Dorsolateral prefrontal cortex (tissue), 120 donors: ENCODE measurements at regions of chr12 and their contacts with region 1.

Region 1: DNA sequence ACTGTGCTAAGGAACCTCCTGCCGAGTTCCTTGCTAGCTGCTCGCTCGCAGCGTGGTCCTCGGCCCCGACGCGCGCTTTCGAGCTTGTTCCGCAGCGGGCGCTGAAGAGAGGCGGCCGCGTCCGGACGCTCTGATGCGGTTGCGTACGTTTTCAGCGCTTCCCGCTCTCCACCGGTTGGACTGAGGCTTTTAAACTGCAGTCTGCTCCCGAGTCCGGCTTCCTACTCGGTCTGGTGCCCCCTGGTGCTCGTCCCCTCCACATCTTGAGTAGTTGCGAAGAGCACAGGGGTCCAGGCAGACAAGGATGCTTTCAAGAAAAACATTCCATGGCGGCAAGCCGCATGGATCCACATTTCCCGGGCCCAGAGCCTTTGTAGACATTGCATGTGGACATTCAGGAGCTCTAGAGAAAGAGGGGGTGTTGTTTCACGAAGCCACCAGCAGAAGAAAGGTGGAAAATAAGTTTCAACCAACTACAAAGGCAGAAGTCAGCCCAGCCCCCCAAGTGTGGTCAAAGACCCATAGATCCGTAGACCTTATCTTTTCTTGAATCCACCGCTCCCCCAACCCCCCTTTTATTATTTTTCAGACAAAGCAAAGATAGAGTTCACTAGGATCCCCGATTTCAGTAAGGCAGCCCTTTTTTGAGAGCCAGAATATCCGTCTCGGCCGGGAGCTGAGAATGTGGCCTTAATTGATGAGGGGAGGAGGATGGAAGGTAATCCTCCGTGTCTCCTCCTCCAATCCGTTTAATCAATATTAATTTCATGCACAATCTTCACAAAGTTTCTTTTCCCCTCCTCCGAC is 984 bp upstream of the WNK1 start:
- DNase-seq: peak; percentile 86 to 94 (median 93)
- H3K4me3 ChIP-seq: peak overlapping the region; percentile 47 to 95 (median 87)
- H3K27ac ChIP-seq: peak overlapping the region; percentile 78 to 100 (median 99)
- H3K27me3 ChIP-seq: no peaks in the 10 kb centered on the region
- CTCF ChIP-seq: peak in 55 of 56 donors; percentile 47 to 91 (median 81)

Region 2: DNA sequence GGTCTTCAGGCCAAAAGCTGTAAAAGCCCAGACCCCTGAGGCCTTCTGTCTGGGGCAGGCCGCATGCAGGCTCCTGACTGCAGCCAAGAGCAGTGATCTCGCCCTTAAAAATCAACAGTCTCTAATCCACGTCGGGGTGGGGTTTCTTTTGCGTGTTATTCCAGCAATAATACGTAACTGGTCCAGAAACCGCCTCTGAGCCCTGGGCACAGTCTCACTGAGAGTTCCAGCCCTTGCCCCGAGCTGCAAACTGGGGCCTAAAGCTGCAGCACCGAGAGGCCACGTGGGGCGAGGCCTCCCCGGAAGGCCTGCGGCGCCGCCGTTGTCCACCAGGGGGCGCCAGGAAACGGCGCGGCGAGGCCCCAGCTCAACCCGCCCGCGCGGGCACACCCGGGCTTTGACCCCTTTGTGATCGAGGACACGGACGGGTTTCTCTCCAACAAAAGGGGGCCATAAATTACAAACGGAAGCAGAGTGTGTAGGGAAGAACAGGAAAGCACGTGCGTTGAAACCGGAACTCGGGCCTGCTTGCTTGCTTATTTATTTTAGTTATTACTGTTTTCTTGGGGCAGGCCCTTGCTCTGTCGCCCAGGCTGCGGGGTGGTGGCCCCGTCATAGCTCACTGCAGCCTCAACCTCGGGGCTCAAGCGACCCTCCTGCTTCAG is 175.3 kb before region 1 on chr12:
- intact Hi-C with region 1: loop called (anchors 2 kb)
- DNase-seq: peak in 9 of 10 donors; percentile 45 to 89 (median 67)
- H3K4me3 ChIP-seq: peak overlapping the region in 50 of 59 donors; percentile 7 to 51 (median 32)
- H3K27ac ChIP-seq: peak overlapping the region in 54 of 59 donors; percentile 0 to 83 (median 60)
- H3K27me3 ChIP-seq: no peaks in the 10 kb centered on the region
- CTCF ChIP-seq: peak; percentile 94 to 100 (median 99)

Region 3: GRCh38 chr12:642633-643474 is 108.5 kb before region 1 on chr12:
- intact Hi-C with region 1: loop called (anchors 2 kb)
- DNase-seq: peak; percentile 45 to 81 (median 60)
- H3K4me3 ChIP-seq: peak overlapping the region; percentile 45 to 81 (median 70)
- H3K27ac ChIP-seq: peak overlapping the region; percentile 83 to 100 (median 97)
- H3K27me3 ChIP-seq: no peaks in the 10 kb centered on the region
- CTCF ChIP-seq: peak in 32 of 56 donors; percentile 1 to 48 (median 23)

Region 4: GRCh38 chr12:701896-702539 is 49.4 kb before region 1 on chr12:
- intact Hi-C with region 1: loop called (anchors 2 to 5 kb)
- DNase-seq: peak in 9 of 10 donors; percentile 47 to 88 (median 73)
- H3K4me3 ChIP-seq: peak overlapping the region in 1 of 59 donors; percentile 3
- H3K27ac ChIP-seq: peak overlapping the region; percentile 80 to 100 (median 97)
- H3K27me3 ChIP-seq: no peaks in the 10 kb centered on the region
- CTCF ChIP-seq: peak in 3 of 56 donors; percentile 12 to 22 (median 17)

Region 5: DNA sequence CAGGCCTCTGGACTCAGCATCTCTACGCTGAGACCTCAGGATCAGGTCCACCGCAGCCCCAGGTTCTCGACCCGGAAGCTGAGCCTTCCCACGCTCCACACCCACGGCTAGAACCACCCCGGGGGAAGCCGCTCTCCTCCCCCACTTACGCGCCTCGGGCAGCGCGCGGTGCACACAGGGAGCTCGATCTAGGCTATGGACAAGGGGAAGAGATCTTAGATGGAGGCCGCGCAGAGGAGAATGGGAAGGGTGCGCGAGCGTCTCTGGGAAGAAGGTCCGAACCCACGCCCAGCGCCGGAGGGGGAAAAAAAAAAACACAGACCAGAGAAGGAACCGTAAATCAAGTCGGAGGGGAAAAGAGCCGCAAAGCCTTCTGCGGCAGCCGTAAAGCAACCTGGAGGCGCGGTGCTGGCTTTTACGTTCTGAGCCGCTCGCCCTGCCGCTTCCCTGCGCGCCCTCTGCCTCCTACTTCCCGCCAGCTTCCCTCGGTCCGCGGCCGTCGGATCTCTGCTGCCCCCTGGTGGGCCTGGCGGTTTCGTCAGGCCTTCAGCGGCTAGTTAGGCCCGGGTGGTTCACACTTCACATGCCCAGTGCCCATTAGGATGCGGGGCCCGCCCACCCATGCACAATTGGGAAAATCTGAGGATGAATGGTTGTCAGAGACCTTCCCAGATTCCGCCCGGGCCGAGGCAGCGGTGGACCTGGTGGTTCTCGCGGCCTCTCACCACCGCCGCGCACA is 198.2 kb after region 1 on chr12 and contains the start of gene RAD52:
- intact Hi-C with region 1: loop called (anchors 1 to 5 kb)
- DNase-seq: peak; percentile 93 to 98 (median 96)
- H3K4me3 ChIP-seq: peak within 1 kb of the TSS; percentile 58 to 99 (median 87)
- H3K27ac ChIP-seq: peak within 1 kb of the TSS; percentile 76 to 97 (median 92)
- H3K27me3 ChIP-seq: no peaks in the 10 kb centered on the region
- CTCF ChIP-seq: peak; percentile 95 to 100 (median 99)
- total RNA-seq, gene RAD52: 14.4 to 71.1 (median 31.1) TPM

Region 6: DNA sequence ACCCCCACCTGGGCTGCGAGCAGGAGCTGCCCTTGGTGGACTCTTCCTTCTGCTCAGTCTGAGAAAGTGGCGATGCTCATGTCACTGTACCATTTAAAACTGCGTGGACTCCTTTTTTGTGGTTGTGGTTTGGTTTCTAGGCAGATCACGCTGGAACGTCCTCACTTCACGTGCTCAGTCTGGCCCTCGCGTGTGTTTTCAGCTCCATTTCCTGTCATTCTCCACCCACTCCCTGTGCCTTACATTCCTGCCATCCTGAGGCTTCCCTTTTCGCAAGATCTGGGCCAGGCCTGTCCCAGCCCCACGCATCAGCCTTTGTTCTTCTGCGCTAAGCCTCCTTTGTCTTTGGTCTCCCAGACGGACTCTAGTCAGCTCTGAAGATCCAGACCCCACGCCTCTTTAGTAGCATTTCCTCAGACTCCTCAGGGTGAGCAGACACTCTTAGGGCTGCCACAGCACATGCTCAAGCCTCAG is 737.5 kb after region 1 on chr12:
- intact Hi-C with region 1: no loop called
- DNase-seq: no peak
- H3K4me3 ChIP-seq: no peak overlapping the region
- H3K27ac ChIP-seq: no peak overlapping the region
- H3K27me3 ChIP-seq: no peaks in the 10 kb centered on the region
- CTCF ChIP-seq: no peak

Region 7: GRCh38 chr12:1594261-1595025 is 843.0 kb after region 1 on chr12 and contains the start of gene FBXL14:
- intact Hi-C with region 1: loop called in 1 of 2 experiments (anchors 10 kb)
- DNase-seq: peak; percentile 83 to 93 (median 90)
- H3K4me3 ChIP-seq: peak within 1 kb of the TSS; percentile 63 to 93 (median 81)
- H3K27ac ChIP-seq: peak within 1 kb of the TSS; percentile 91 to 100 (median 99)
- H3K27me3 ChIP-seq: no peaks in the 10 kb centered on the region
- CTCF ChIP-seq: peak in 14 of 56 donors; percentile 2 to 31 (median 13)
- total RNA-seq, gene FBXL14: 26.6 to 73.6 (median 35.7) TPM